Pancreas (tissue), 10 donors: ENCODE measurements at regions of chr17 and their contacts with region 1.

Region 1: GRCh38 chr17:6995431-6996255 is at the start of gene ALOX12:
- DNase-seq: peak in 2 of 6 donors; percentile 65 to 74
- ATAC-seq: peak; percentile 38 to 77 (median 62)
- H3K4me3 ChIP-seq: peak within 1 kb of the TSS in 1 of 4 donors; percentile 27
- H3K27ac ChIP-seq: no peak within 1 kb of the TSS
- H3K4me1 ChIP-seq: no peaks in the 10 kb centered on the region
- H3K27me3 ChIP-seq: no peaks in the 10 kb centered on the region
- CTCF ChIP-seq: no peak
- total RNA-seq, gene ALOX12: not detected

Region 2: DNA sequence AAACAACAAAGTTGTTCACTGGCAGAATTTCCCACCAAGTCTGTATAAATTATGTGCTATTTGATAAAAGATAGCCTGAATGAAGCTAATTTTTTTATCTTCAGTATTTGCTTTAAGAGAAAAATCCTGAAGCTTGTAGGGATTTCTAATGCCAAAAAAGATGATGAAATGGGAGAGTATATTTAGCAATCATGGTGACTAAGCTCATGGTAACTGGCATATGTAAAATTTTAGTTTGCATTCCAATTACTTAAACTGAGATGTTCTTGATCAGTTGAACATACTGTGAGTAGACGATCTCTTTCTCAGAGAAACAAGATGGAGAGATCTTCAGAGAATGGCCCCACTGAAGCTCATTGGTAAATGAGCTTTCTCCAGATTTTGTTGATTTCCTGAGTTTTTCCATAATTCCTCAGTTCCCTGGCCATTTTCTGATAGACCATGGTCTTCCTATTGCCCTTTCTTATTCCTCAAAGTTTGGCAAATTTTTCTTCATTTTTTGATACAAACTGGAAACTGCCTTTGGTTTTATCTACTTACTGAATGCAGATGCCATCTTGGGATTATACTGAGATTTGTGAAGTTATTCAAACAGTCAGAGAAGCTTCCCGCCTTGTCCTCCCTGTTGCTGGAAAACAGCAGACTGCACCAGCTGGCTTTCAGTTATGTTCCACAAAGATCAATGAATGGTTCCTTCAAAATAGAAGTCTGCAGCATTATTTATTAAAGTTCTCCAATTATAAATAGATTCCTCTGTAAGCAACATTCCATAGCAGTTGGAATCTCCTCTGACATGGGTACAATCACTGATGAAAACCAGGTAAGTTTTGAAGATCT is 68.1 kb before region 1 on chr17:
- intact Hi-C with region 1: loop called in 1 of 3 experiments (anchors 10 kb)
- DNase-seq: no peak
- ATAC-seq: no peak
- H3K4me3 ChIP-seq: no peak overlapping the region
- H3K27ac ChIP-seq: no peak overlapping the region
- H3K4me1 ChIP-seq: no peaks in the 10 kb centered on the region
- H3K27me3 ChIP-seq: no peaks in the 10 kb centered on the region
- CTCF ChIP-seq: no peak